MCF 10A (cell line): ENCODE measurements at regions of chr2 and their contacts with region 1.

Region 1: GRCh38 chr2:42663106-42663780 is 94.8 kb downstream of the MTA3 start:
- DNase-seq: peak; percentile 79
- H3K4me3 Mint-ChIP-seq: no peak overlapping the region
- H3K27ac Mint-ChIP-seq: no peak overlapping the region
- H3K4me1 Mint-ChIP-seq: no peaks in the 10 kb centered on the region
- H3K27me3 Mint-ChIP-seq: no peaks in the 10 kb centered on the region
- CTCF ChIP-seq: peak; percentile 98

Region 2: DNA sequence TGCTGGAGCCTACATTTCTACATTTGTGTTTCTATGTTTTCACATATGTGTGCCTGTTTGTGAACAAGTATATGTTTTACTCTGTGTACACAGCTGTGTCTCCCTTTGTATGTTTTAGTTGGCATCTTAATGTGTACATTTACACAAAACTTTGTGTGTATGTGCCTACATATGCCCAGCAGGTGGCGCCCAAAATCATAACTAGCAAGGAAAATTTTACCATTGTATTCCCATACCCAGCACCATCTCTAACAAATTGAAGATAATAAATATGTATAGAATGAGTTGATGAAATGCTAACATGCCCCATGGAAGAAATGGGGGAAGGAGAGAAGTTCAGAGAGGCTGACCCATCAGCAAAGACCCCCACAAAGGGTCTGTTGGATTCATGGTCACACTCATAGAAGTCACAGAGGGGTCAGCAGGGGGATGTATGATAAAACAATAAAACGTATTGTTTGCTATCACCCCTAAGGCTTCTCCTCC is 567.3 kb before region 1 on chr2:
- CTCF ChIA-PET with region 1: no interaction called
- POLR2A ChIA-PET with region 1: no interaction called
- intact Hi-C with region 1: loop called (anchors 5 kb)
- DNase-seq: peak; percentile 76
- H3K4me3 Mint-ChIP-seq: no peak overlapping the region
- H3K27ac Mint-ChIP-seq: no peak overlapping the region
- H3K4me1 Mint-ChIP-seq: no peaks in the 10 kb centered on the region
- H3K27me3 Mint-ChIP-seq: peaks cover 34% of the 10 kb centered on the region
- CTCF ChIP-seq: peak; percentile 70

Region 3: GRCh38 chr2:42494355-42495233 is 168.6 kb before region 1 on chr2:
- CTCF ChIA-PET with region 1: interaction called, 46 read pairs
- POLR2A ChIA-PET with region 1: interaction called, 3 read pairs
- intact Hi-C with region 1: loop called (anchors 1 kb)
- DNase-seq: peak; percentile 76
- H3K4me3 Mint-ChIP-seq: peak overlapping the region; percentile 77
- H3K27ac Mint-ChIP-seq: no peak overlapping the region
- H3K4me1 Mint-ChIP-seq: no peaks in the 10 kb centered on the region
- H3K27me3 Mint-ChIP-seq: no peaks in the 10 kb centered on the region
- CTCF ChIP-seq: peak; percentile 81

Region 4: GRCh38 chr2:42618972-42619371 is 44.3 kb before region 1 on chr2:
- CTCF ChIA-PET with region 1: interaction called, 11 read pairs
- POLR2A ChIA-PET with region 1: no interaction called
- intact Hi-C with region 1: no loop called
- DNase-seq: peak; percentile 47
- H3K4me3 Mint-ChIP-seq: no peak overlapping the region
- H3K27ac Mint-ChIP-seq: peak overlapping the region; percentile 24
- H3K4me1 Mint-ChIP-seq: peaks cover 12% of the 10 kb centered on the region
- H3K27me3 Mint-ChIP-seq: no peaks in the 10 kb centered on the region
- CTCF ChIP-seq: no peak

Region 5: GRCh38 chr2:42673989-42674579 is 10.8 kb after region 1 on chr2:
- CTCF ChIA-PET with region 1: interaction called, 23 read pairs
- POLR2A ChIA-PET with region 1: interaction called, 3 read pairs
- intact Hi-C with region 1: no loop called
- DNase-seq: no peak
- H3K4me3 Mint-ChIP-seq: no peak overlapping the region
- H3K27ac Mint-ChIP-seq: no peak overlapping the region
- H3K4me1 Mint-ChIP-seq: no peaks in the 10 kb centered on the region
- H3K27me3 Mint-ChIP-seq: no peaks in the 10 kb centered on the region
- CTCF ChIP-seq: no peak